T-cell (primary cell): ENCODE measurements at regions of chr4 and their contacts with region 1.

Region 1: GRCh38 chr4:55948726-55949474 is at the start of gene CEP135:
- DNase-seq: peak; percentile 81 to 95 (median 88)
- ATAC-seq: peak; percentile 71 to 83 (median 80)
- H3K4me3 ChIP-seq: peak within 1 kb of the TSS; percentile 76 to 83
- H3K4me3 Mint-ChIP-seq: peak within 1 kb of the TSS; percentile 86 to 95 (median 90)
- H3K27ac ChIP-seq: peak within 1 kb of the TSS; percentile 80
- H3K27ac Mint-ChIP-seq: peak within 1 kb of the TSS; percentile 89 to 94
- H3K4me1 ChIP-seq: peaks cover 6 to 20% of the 10 kb centered on the region in 2 experiments
- H3K4me1 Mint-ChIP-seq: peaks cover 51 to 57% (median 52%) of the 10 kb centered on the region in 3 donors
- H3K27me3 ChIP-seq: no peaks in the 10 kb centered on the region
- H3K27me3 Mint-ChIP-seq: no peaks in the 10 kb centered on the region
- total RNA-seq, gene CEP135: 17.3 to 24.5 (median 21.7) TPM

Region 2: GRCh38 chr4:55791666-55792065 is 157.2 kb before region 1 on chr4:
- CTCF ChIA-PET with region 1: no interaction called
- POLR2A ChIA-PET with region 1: no interaction called
- DNase-seq: no peak
- ATAC-seq: no peak
- H3K4me3 ChIP-seq: no peak overlapping the region
- H3K4me3 Mint-ChIP-seq: no peak overlapping the region
- H3K27ac ChIP-seq: no peak overlapping the region
- H3K27ac Mint-ChIP-seq: no peak overlapping the region
- H3K4me1 ChIP-seq: no peaks in the 10 kb centered on the region
- H3K4me1 Mint-ChIP-seq: peaks cover 0 to 6% (median 3%) of the 10 kb centered on the region in 3 donors
- H3K27me3 ChIP-seq: peaks cover 9 to 21% of the 10 kb centered on the region in 2 experiments
- H3K27me3 Mint-ChIP-seq: peaks cover 40 to 49% of the 10 kb centered on the region in 2 donors

Region 3: GRCh38 chr4:55996611-55997010 is 47.7 kb after region 1 on chr4:
- CTCF ChIA-PET with region 1: no interaction called
- POLR2A ChIA-PET with region 1: no interaction called
- DNase-seq: no peak
- ATAC-seq: no peak
- H3K4me3 ChIP-seq: no peak overlapping the region
- H3K4me3 Mint-ChIP-seq: no peak overlapping the region
- H3K27ac ChIP-seq: no peak overlapping the region
- H3K27ac Mint-ChIP-seq: no peak overlapping the region
- H3K4me1 ChIP-seq: no peaks in the 10 kb centered on the region
- H3K4me1 Mint-ChIP-seq: peaks cover 7 to 21% (median 11%) of the 10 kb centered on the region in 3 donors
- H3K27me3 ChIP-seq: no peaks in the 10 kb centered on the region
- H3K27me3 Mint-ChIP-seq: no peaks in the 10 kb centered on the region

Region 4: GRCh38 chr4:56387023-56388001 is 438.4 kb after region 1 on chr4 and contains the start of gene AASDH:
- CTCF ChIA-PET with region 1: interaction called in 1 of 2 experiments, 12 read pairs
- POLR2A ChIA-PET with region 1: interaction called in 1 of 2 experiments, 3 read pairs
- DNase-seq: peak; percentile 90 to 98 (median 94)
- ATAC-seq: peak; percentile 88 to 92 (median 89)
- H3K4me3 ChIP-seq: peak within 1 kb of the TSS; percentile 76 to 95
- H3K4me3 Mint-ChIP-seq: peak within 1 kb of the TSS; percentile 88 to 98 (median 91)
- H3K27ac ChIP-seq: peak within 1 kb of the TSS; percentile 97
- H3K27ac Mint-ChIP-seq: peak within 1 kb of the TSS; percentile 95 to 99
- H3K4me1 ChIP-seq: peaks cover 11 to 15% of the 10 kb centered on the region in 2 experiments
- H3K4me1 Mint-ChIP-seq: peaks cover 40 to 56% (median 52%) of the 10 kb centered on the region in 3 donors
- H3K27me3 ChIP-seq: no peaks in the 10 kb centered on the region
- H3K27me3 Mint-ChIP-seq: no peaks in the 10 kb centered on the region
- total RNA-seq, gene AASDH: 13.3 to 17.7 (median 16.0) TPM